ENCODE measurements at regions of chr2 and their contacts with region 1.

Region 1: GRCh38 chr2:24827321-24828237 is 34.4 kb downstream of the CENPO start:
- DNase-seq: peak; percentile 80 to 88 (median 82)
- ATAC-seq: peak; percentile 97
- H3K4me3 ChIP-seq: no peak overlapping the region
- H3K27ac ChIP-seq: no peak overlapping the region
- H3K4me1 ChIP-seq: peaks cover 0 to 5% of the 10 kb centered on the region in 2 experiments; a peak in 2 of 5 replicates
- H3K27me3 ChIP-seq: no peaks in the 10 kb centered on the region
- CTCF ChIP-seq: peak; percentile 85 to 95 (median 94)
- EP300 ChIP-seq: no peak
- POLR2A ChIP-seq: no peak; the same call in 1 of the 2 replicates
- RAD21 ChIP-seq: peak; percentile 89 to 93

Region 2: DNA sequence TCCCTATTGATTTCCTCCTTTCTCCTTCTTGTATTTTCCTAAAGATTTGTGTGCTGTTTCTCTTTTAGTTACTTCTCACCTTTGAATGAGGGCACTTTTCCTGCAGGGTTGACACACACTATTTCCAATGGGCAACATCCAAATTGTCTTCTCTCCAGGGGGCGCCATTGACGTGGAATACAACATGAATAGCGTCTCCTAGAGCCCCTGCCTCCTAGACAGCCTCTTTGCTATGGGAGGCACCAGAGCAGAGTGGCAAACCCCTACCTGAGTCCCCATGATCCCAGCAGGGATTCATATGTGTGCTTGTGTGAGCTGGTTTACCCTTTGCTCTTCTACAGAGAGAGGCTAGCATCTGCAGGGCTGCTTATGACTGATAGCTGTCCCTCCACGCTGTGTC is 405.9 kb before region 1 on chr2:
- CTCF ChIA-PET with region 1: interaction called, 4 read pairs
- POLR2A ChIA-PET with region 1: no interaction called
- in situ Hi-C with region 1: no loop called
- intact Hi-C with region 1: loop called (anchors 1 kb)
- DNase-seq: peak; percentile 14 to 81 (median 37)
- ATAC-seq: peak; percentile 95
- H3K4me3 ChIP-seq: no peak overlapping the region
- H3K27ac ChIP-seq: no peak overlapping the region; the same call in 2 of the 3 replicates
- H3K4me1 ChIP-seq: peaks cover 3 to 4% of the 10 kb centered on the region in 2 experiments; a peak in 3 of 5 replicates
- H3K27me3 ChIP-seq: no peaks in the 10 kb centered on the region
- CTCF ChIP-seq: peak; percentile 74 to 82 (median 74)
- EP300 ChIP-seq: no peak
- POLR2A ChIP-seq: no peak
- RAD21 ChIP-seq: peak; percentile 89 to 94

Region 3: DNA sequence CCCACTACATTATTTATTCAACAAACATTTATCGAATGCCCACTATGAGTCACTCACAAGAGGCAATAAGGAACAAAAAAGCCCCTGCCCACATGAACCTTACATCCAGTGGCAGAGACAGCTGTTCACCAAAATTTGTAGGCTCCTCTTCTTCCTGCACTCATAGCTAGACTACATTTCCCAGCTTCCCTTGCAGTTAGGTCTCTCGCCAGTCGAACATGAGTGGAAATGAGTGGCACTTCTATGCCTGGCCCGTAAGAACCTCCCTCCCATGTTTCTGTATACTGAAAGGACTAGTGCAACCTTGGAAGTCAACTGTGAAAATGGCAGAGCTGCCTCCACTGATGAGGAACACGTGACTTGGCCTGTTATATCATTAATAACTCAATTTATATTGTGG is 355.9 kb before region 1 on chr2:
- CTCF ChIA-PET with region 1: no interaction called
- POLR2A ChIA-PET with region 1: no interaction called
- in situ Hi-C with region 1: no loop called
- intact Hi-C with region 1: no loop called
- DNase-seq: peak in 1 of 4 experiments; percentile 41
- ATAC-seq: peak; percentile 87
- H3K4me3 ChIP-seq: no peak overlapping the region
- H3K27ac ChIP-seq: no peak overlapping the region
- H3K4me1 ChIP-seq: peaks cover 0 to 7% of the 10 kb centered on the region in 2 experiments; a peak in 2 of 5 replicates
- H3K27me3 ChIP-seq: no peaks in the 10 kb centered on the region
- CTCF ChIP-seq: no peak
- EP300 ChIP-seq: no peak
- POLR2A ChIP-seq: no peak
- RAD21 ChIP-seq: no peak

Region 4: DNA sequence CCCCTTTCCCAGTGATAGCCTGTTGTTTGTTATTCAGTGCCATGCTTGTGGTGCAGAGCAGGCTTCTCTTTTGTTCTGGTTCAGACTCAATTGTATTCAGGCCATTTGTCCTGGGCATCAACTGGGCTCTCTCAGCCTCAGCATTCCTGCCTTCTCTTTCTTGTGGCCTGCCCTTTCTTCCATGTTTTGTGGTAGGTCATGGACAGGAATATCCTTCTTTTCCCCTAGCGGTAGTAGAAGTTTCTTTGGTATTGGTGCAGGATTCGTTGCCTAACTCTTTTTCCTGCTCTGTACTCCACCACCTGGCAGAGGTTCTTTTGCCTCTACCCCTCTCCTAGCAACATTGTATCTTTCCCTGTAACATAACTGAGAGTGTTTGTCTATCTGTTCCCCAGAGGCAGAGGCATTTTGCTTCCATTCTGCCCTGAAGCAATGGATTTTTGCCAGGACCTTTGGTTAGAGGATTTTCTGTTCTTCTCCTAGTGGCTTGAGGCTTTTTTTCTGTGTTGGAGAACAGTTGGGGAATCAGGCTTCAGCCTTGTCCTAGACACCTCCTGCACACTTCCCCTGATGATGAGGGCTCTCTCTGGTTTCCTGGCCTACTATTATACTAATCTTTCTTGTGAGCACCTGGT is 268.0 kb before region 1 on chr2:
- CTCF ChIA-PET with region 1: no interaction called
- POLR2A ChIA-PET with region 1: no interaction called
- in situ Hi-C with region 1: no loop called
- intact Hi-C with region 1: no loop called
- DNase-seq: no peak
- ATAC-seq: no peak
- H3K4me3 ChIP-seq: no peak overlapping the region
- H3K27ac ChIP-seq: no peak overlapping the region
- H3K4me1 ChIP-seq: no peaks in the 10 kb centered on the region
- H3K27me3 ChIP-seq: no peaks in the 10 kb centered on the region
- CTCF ChIP-seq: no peak
- EP300 ChIP-seq: no peak
- POLR2A ChIP-seq: no peak
- RAD21 ChIP-seq: no peak

Region 5: GRCh38 chr2:24613154-24613814 is 214.3 kb before region 1 on chr2:
- CTCF ChIA-PET with region 1: no interaction called
- POLR2A ChIA-PET with region 1: no interaction called
- in situ Hi-C with region 1: no loop called
- intact Hi-C with region 1: loop called (anchors 1 kb)
- DNase-seq: peak in 2 of 4 experiments; percentile 50 to 65
- ATAC-seq: peak; percentile 97
- H3K4me3 ChIP-seq: no peak overlapping the region
- H3K27ac ChIP-seq: no peak overlapping the region; the same call in 2 of the 3 replicates
- H3K4me1 ChIP-seq: peaks cover 0 to 2% of the 10 kb centered on the region in 2 experiments; a peak in 2 of 5 replicates
- H3K27me3 ChIP-seq: no peaks in the 10 kb centered on the region
- CTCF ChIP-seq: peak; percentile 53 to 72 (median 68)
- EP300 ChIP-seq: no peak
- POLR2A ChIP-seq: no peak
- RAD21 ChIP-seq: peak in 1 of 2 experiments; percentile 85; a peak in 2 of 4 replicates

Region 6: GRCh38 chr2:25131567-25132298 is 304.2 kb after region 1 on chr2:
- CTCF ChIA-PET with region 1: no interaction called
- POLR2A ChIA-PET with region 1: no interaction called
- in situ Hi-C with region 1: no loop called
- intact Hi-C with region 1: loop called (anchors 5 kb)
- DNase-seq: peak in 2 of 4 experiments; percentile 52 to 57
- ATAC-seq: peak; percentile 9; the same call in 1 of the 3 replicates
- H3K4me3 ChIP-seq: no peak overlapping the region
- H3K27ac ChIP-seq: no peak overlapping the region
- H3K4me1 ChIP-seq: peaks cover 2 to 12% of the 10 kb centered on the region in 2 experiments; a peak in 4 of 5 replicates
- H3K27me3 ChIP-seq: peaks cover 48 to 78% of the 10 kb centered on the region in 2 experiments; a peak in 4 of 5 replicates
- CTCF ChIP-seq: no peak
- EP300 ChIP-seq: no peak
- POLR2A ChIP-seq: no peak
- RAD21 ChIP-seq: no peak

Measured in K562 (cell line).